ENCODE measurements at regions of chr9 and their contacts with region 1.

Region 1: GRCh38 chr9:2158111-2158610 is 143.0 kb downstream of the SMARCA2 start:
- DNase-seq: peak in 12 of 14 experiments; percentile 6 to 80 (median 21)
- ATAC-seq: peak; percentile 85
- H3K4me3 ChIP-seq: peak overlapping the region; percentile 60
- H3K4me3 Mint-ChIP-seq: peak overlapping the region; percentile 86
- H3K27ac ChIP-seq: no peak overlapping the region
- H3K27ac Mint-ChIP-seq: peak overlapping the region; percentile 73
- H3K4me1 ChIP-seq: peaks cover 21% of the 10 kb centered on the region
- H3K4me1 Mint-ChIP-seq: peaks cover 72% of the 10 kb centered on the region
- H3K27me3 ChIP-seq: no peaks in the 10 kb centered on the region
- H3K27me3 Mint-ChIP-seq: no peaks in the 10 kb centered on the region
- CTCF ChIP-seq: no peak

Region 2: GRCh38 chr9:2181792-2182191 is 23.6 kb after region 1 on chr9:
- CTCF ChIA-PET with region 1: no interaction called
- POLR2A ChIA-PET with region 1: no interaction called
- intact Hi-C with region 1: no loop called
- DNase-seq: peak in 5 of 14 experiments; percentile 12 to 37 (median 32)
- ATAC-seq: no peak
- H3K4me3 ChIP-seq: no peak overlapping the region
- H3K4me3 Mint-ChIP-seq: no peak overlapping the region
- H3K27ac ChIP-seq: no peak overlapping the region
- H3K27ac Mint-ChIP-seq: no peak overlapping the region
- H3K4me1 ChIP-seq: no peaks in the 10 kb centered on the region
- H3K4me1 Mint-ChIP-seq: no peaks in the 10 kb centered on the region
- H3K27me3 ChIP-seq: no peaks in the 10 kb centered on the region
- H3K27me3 Mint-ChIP-seq: no peaks in the 10 kb centered on the region
- CTCF ChIP-seq: peak; percentile 23

Region 3: DNA sequence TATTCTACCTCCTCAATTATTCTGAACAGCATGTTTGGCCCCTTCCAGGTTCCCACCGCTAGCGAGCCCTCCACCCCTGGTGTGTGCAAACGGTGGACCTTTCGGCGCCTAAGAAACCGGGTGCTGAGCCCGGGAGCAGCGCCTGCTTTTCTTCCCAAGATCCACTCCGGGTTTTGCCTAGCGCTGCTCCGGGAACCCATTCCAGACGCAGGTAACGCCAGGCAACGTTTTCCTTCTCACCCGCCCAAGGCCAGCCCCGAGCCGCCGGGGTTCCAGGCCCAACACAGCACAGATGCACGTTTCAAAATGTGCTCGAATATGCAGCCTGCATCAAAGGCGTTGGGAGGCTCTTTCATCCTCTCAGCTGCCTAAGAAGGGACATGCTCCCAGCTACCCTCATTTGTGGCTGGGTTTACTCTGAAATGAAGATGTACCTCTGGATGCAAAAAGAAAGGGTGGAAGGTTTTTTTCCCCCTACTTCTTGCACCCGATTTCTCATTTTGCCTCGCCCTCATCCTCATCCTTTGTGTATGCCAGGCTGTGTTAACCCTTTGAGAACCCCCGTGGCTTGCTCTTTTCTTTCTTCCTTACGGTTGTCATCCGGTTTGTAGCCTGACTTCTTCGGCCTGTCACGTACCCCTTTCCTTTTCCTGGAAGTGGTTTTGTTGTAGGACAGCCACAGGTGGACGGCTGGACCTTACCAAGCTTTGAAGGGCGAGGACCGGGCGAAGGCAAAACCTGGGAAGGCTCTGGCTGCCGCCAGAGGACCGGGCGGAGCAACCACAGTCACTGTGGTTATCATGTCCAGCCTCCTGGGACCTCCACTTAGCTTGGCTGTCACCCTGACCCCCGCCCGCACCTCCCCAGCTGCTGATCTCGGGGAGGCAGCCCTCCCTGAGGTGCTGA is 83.9 kb after region 1 on chr9:
- CTCF ChIA-PET with region 1: no interaction called
- POLR2A ChIA-PET with region 1: no interaction called
- intact Hi-C with region 1: loop called in 1 of 2 experiments (anchors 1 kb)
- DNase-seq: peak; percentile 1 to 77 (median 26)
- ATAC-seq: peak; percentile 93
- H3K4me3 ChIP-seq: peak overlapping the region; percentile 59
- H3K4me3 Mint-ChIP-seq: peak overlapping the region; percentile 78
- H3K27ac ChIP-seq: no peak overlapping the region
- H3K27ac Mint-ChIP-seq: no peak overlapping the region
- H3K4me1 ChIP-seq: peaks cover 15% of the 10 kb centered on the region
- H3K4me1 Mint-ChIP-seq: peaks cover 17% of the 10 kb centered on the region
- H3K27me3 ChIP-seq: no peaks in the 10 kb centered on the region
- H3K27me3 Mint-ChIP-seq: peaks cover 17% of the 10 kb centered on the region
- CTCF ChIP-seq: no peak

Region 4: DNA sequence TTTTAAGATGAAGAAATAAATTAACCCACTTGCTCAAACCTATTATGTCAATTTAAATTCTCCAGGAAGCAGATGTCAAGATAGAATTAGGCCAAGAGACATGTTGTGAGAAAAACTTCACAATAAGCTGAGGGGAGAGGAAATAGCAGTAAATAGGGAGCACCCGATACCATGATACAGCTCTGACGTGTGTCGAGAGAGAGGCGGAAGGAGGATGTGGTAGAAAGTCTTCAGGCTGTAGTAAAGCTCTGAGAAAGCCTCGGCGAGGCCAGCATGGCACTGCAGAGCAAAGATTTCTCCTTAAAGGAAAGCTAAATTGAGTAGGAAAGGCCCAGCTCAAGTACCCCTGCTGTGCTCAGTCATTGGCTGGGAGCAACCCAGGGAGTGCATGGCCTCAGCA is 691.8 kb after region 1 on chr9:
- CTCF ChIA-PET with region 1: no interaction called
- POLR2A ChIA-PET with region 1: no interaction called
- intact Hi-C with region 1: loop called in 1 of 2 experiments (anchors 10 kb)
- DNase-seq: peak in 4 of 14 experiments; percentile 4 to 54 (median 28)
- ATAC-seq: peak; percentile 92
- H3K4me3 ChIP-seq: no peak overlapping the region
- H3K4me3 Mint-ChIP-seq: no peak overlapping the region
- H3K27ac ChIP-seq: no peak overlapping the region
- H3K27ac Mint-ChIP-seq: peak overlapping the region; percentile 8
- H3K4me1 ChIP-seq: peaks cover 7% of the 10 kb centered on the region
- H3K4me1 Mint-ChIP-seq: peaks cover 12% of the 10 kb centered on the region
- H3K27me3 ChIP-seq: no peaks in the 10 kb centered on the region
- H3K27me3 Mint-ChIP-seq: peaks cover 23% of the 10 kb centered on the region
- CTCF ChIP-seq: no peak